GM13976 (cell line): ENCODE measurements at regions of chr1 and their contacts with region 1.

Region 1: DNA sequence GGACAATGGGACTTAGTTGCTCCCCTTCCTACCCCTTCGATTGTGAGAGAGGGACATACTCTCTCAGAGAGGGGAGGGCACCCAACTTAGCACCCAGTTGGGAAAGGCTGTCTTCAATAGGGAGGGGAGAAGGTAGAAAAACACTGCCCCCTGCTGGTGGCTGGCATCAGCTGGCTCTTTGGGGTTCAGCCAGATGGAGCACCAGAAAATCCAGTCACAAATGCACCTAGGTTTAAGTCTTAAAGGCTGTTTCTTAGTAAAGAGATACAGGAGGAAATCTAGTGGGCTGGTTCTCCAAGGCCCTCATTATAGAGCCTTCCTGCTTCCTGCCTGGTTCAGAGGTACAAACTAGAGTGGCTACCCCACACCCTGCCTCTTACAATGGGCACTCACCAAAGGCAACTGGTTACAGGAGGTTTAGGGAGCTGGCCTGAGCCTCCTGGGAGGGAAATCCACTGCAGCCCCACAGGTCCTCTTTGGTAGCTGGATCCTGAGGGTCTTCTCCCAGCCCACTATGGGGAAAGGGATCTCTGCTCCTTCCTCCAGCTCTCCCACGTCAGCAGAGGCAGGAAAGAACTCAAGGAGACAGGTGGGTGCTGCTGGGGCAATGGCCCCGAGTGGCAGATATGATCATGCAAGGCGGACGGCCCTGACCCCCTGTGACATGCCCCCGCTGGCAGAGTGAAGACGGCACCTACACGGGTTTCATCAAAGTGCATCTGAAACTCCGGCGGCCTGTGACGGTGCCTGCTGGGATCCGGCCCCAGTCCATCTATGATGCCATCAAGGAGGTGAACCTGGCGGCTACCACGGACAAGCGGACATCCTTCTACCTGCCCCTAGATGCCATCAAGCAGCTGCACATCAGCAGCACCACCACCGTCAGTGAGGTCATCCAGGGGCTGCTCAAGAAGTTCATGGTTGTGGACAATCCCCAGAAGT is 28.3 kb downstream of the EIF2D start:
- DNase-seq: peak; percentile 84
- CTCF ChIP-seq: peak; percentile 87

Region 2: GRCh38 chr1:206489980-206490770 is 93.8 kb before region 1 on chr1:
- in situ Hi-C with region 1: loop called (anchors 5 kb)
- DNase-seq: peak; percentile 85
- CTCF ChIP-seq: peak; percentile 85

Region 3: GRCh38 chr1:206544562-206545257 is 39.3 kb before region 1 on chr1:
- in situ Hi-C with region 1: loop called (anchors 5 kb)
- DNase-seq: peak; percentile 85
- CTCF ChIP-seq: peak; percentile 97